Endothelial cell of umbilical vein (primary cell): ENCODE measurements at regions of chr5 and their contacts with region 1.

Region 1: GRCh38 chr5:178113199-178113787 is at the start of gene N4BP3:
- DNase-seq: peak; percentile 56
- H3K4me3 ChIP-seq: peak within 1 kb of the TSS; percentile 20 to 94 (median 69)
- H3K27ac ChIP-seq: no peak within 1 kb of the TSS
- H3K4me1 ChIP-seq: peaks cover 37% of the 10 kb centered on the region
- H3K27me3 ChIP-seq: no peaks in the 10 kb centered on the region
- CTCF ChIP-seq: peak; percentile 3 to 7
- POLR2A ChIP-seq: no peak
- total RNA-seq, gene N4BP3: 38.2 and 40.3 TPM in 2 replicates

Region 2: DNA sequence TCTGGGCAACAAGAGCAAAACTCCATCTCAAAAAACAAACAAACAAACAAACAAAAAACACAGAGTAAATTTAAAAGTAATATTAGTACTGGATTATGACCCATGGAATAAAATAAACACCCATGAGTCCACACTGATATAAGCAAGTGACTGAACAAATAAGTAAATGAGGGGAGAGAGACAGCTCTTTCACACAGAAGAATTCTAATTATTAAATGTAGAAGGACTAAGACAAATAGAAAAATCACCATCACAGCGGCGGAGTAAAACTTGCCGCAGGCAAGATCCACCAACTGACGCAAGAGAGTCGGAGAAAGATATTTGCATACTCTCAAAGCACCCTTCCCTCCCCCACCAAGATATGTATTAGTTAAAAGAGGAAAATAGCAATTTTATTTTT is 14.7 kb before region 1 on chr5:
- CTCF ChIA-PET with region 1: no interaction called
- POLR2A ChIA-PET with region 1: no interaction called
- dilution Hi-C with region 1: no loop called
- intact Hi-C with region 1: no loop called
- DNase-seq: no peak
- H3K4me3 ChIP-seq: no peak overlapping the region
- H3K27ac ChIP-seq: no peak overlapping the region
- H3K4me1 ChIP-seq: no peaks in the 10 kb centered on the region
- H3K27me3 ChIP-seq: no peaks in the 10 kb centered on the region
- CTCF ChIP-seq: no peak
- POLR2A ChIP-seq: no peak

Region 3: GRCh38 chr5:178130604-178131485 is 17.6 kb after region 1 on chr5 and contains the start of gene RMND5B:
- CTCF ChIA-PET with region 1: interaction called, 3 read pairs
- POLR2A ChIA-PET with region 1: no interaction called
- dilution Hi-C with region 1: no loop called
- intact Hi-C with region 1: loop called (anchors 1 kb)
- DNase-seq: peak; percentile 68
- H3K4me3 ChIP-seq: peak within 1 kb of the TSS; percentile 62 to 82 (median 64)
- H3K27ac ChIP-seq: peak within 1 kb of the TSS; percentile 40
- H3K4me1 ChIP-seq: peaks cover 11% of the 10 kb centered on the region
- H3K27me3 ChIP-seq: no peaks in the 10 kb centered on the region
- CTCF ChIP-seq: no peak
- POLR2A ChIP-seq: peak; percentile 70
- total RNA-seq, gene RMND5B: 34.2 and 38.2 TPM in 2 replicates